ENCODE measurements at regions of chr1 and their contacts with region 1.

Region 1: GRCh38 chr1:160877221-160877620 is 7.8 kb downstream of the ITLN1 start:
- DNase-seq: no peak
- H3K4me3 ChIP-seq: no peak overlapping the region
- H3K27ac ChIP-seq: no peak overlapping the region
- H3K4me1 ChIP-seq: no peaks in the 10 kb centered on the region
- H3K27me3 ChIP-seq: no peaks in the 10 kb centered on the region
- CTCF ChIP-seq: no peak
- POLR2A ChIP-seq: no peak

Region 2: GRCh38 chr1:161165742-161166668 is 288.8 kb after region 1 on chr1 and contains the start of gene PPOX:
- intact Hi-C with region 1: no loop called
- DNase-seq: peak; percentile 97 to 98
- H3K4me3 ChIP-seq: peak within 1 kb of the TSS; percentile 54 to 88 (median 86)
- H3K27ac ChIP-seq: peak within 1 kb of the TSS; percentile 92 to 93
- H3K4me1 ChIP-seq: peaks cover 0 to 9% of the 10 kb centered on the region in 2 donors
- H3K27me3 ChIP-seq: no peaks in the 10 kb centered on the region
- CTCF ChIP-seq: peak; percentile 9 to 33 (median 31)
- POLR2A ChIP-seq: peak; percentile 32
- total RNA-seq, gene PPOX: 19.5 to 26.8 (median 25.2) TPM

Region 3: GRCh38 chr1:162497723-162498500 is 1620.7 kb after region 1 on chr1 and contains the start of gene UHMK1:
- intact Hi-C with region 1: loop called (anchors 10 kb)
- DNase-seq: peak; percentile 86 to 89
- H3K4me3 ChIP-seq: peak within 1 kb of the TSS; percentile 77 to 99 (median 93)
- H3K27ac ChIP-seq: peak within 1 kb of the TSS; percentile 90 to 93
- H3K4me1 ChIP-seq: no peaks in the 10 kb centered on the region
- H3K27me3 ChIP-seq: no peaks in the 10 kb centered on the region
- CTCF ChIP-seq: no peak
- POLR2A ChIP-seq: peak; percentile 23
- total RNA-seq, gene UHMK1: 44.9 to 68.9 (median 63.8) TPM

Measured in breast epithelium (tissue), 4 donors.